Activated T-helper 2 cell treated with anti-CD3 and anti-CD28 coated beads, Interferon-gamma antibody, Interleukin-2, Interleukin-4, amounts not matched to agents 10 μg/mL and 5 μg/mL and 100 μg/mL, durations not matched to agents 14 hours and 24 hours and 36 hours (primary cell): ENCODE measurements at regions of chr11 and their contacts with region 1.

Region 1: DNA sequence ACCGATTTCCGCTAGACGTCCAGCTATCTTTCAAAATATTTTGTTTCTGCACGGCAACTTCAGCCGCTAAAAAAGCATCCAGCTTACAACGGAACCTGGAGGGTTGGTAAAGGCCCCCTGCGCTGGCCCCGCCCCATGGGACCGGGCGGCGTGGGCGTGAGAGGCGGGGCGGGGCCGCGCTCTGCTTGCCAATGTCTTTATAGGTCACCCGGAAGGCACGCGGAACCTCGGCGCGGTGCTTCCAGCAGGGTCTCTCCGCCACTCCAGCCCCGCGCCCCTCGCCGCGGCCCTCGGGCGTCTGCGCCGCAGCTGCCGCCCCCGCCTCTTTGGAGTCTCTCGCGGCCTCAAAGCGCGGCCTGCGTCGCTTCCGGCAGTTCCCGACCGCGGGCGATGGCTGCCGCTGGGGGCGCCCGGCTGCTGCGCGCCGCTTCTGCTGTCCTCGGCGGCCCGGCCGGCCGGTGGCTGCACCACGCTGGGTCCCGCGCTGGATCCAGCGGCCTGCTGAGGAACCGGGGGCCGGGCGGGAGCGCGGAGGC is at the start of gene FDX1:
- DNase-seq: peak; percentile 78
- H3K4me3 Mint-ChIP-seq: peak within 1 kb of the TSS; percentile 98
- H3K27ac Mint-ChIP-seq: peak within 1 kb of the TSS; percentile 94
- H3K4me1 Mint-ChIP-seq: peaks cover 41% of the 10 kb centered on the region
- H3K27me3 Mint-ChIP-seq: no peaks in the 10 kb centered on the region
- total RNA-seq, gene FDX1: 13.0 and 13.1 TPM in 2 replicates

Region 2: DNA sequence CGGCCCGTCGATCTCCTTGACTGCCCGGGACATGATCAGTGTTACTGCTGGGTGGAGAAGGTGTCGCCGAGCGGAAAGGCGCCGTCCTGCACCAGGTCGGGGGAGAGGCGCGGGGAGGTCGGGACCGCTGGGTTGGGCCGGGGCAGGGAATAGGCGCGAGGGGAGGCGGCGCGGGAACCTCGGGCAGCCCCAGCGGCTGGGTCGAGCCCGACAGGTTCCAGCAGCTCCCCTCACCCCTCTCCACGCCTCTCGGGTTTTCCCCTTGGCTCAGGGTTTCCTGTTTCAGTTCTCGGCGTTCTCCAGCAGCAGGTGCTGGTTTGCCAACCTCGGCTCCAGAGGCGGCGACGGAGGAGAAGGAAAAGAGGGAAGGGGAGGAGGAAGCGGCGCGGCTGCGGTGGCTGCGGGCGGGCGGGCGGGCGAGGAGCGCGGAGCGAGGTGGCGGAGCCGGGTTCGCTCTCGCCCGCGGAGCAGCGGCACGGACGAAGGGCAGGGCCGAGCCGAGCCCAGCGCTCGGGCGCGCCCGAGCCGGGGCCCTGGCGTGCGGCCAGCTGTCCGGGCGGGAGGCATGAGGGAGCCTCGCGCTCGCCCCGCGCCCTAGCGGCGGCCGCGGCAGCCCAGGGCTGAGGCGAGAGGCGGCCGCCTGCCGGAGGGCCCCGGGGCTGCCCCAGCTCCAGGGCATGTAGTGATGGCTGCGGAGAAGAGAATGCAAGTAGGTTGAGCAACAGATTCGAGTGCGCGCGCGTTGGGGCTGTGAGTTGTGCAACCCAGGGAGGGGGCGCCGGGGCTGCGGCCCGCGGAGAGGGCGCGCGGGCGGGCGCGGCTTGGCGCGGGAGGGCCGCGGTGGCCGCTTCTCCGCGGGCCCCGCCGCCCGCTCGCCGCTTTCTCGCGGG is 337.0 kb before region 1 on chr11 and contains the start of gene ZC3H12C:
- intact Hi-C with region 1: loop called (anchors 5 kb)
- DNase-seq: peak; percentile 38
- H3K4me3 Mint-ChIP-seq: peak within 1 kb of the TSS; percentile 89
- H3K27ac Mint-ChIP-seq: peak within 1 kb of the TSS; percentile 95
- H3K4me1 Mint-ChIP-seq: peaks cover 36% of the 10 kb centered on the region
- H3K27me3 Mint-ChIP-seq: peaks cover 32% of the 10 kb centered on the region
- total RNA-seq, gene ZC3H12C: 16.7 and 17.5 TPM in 2 replicates

Region 3: GRCh38 chr11:110296226-110297075 is 133.3 kb before region 1 on chr11 and contains the start of gene RDX:
- intact Hi-C with region 1: loop called (anchors 2 kb)
- DNase-seq: peak; percentile 56
- H3K4me3 Mint-ChIP-seq: peak within 1 kb of the TSS; percentile 95
- H3K27ac Mint-ChIP-seq: peak within 1 kb of the TSS; percentile 63
- H3K4me1 Mint-ChIP-seq: peaks cover 43% of the 10 kb centered on the region
- H3K27me3 Mint-ChIP-seq: no peaks in the 10 kb centered on the region
- total RNA-seq, gene RDX: 63.3 and 64.8 TPM in 2 replicates